ENCODE measurements at regions of chr6 and their contacts with region 1.

Region 1: GRCh38 chr6:145372671-145373151 is 362.6 kb downstream of the EPM2A start:
- DNase-seq: peak; percentile 32
- H3K4me3 Mint-ChIP-seq: peak overlapping the region; percentile 43
- H3K27ac Mint-ChIP-seq: no peak overlapping the region
- H3K4me1 Mint-ChIP-seq: peaks cover 15% of the 10 kb centered on the region
- H3K27me3 Mint-ChIP-seq: no peaks in the 10 kb centered on the region

Region 2: DNA sequence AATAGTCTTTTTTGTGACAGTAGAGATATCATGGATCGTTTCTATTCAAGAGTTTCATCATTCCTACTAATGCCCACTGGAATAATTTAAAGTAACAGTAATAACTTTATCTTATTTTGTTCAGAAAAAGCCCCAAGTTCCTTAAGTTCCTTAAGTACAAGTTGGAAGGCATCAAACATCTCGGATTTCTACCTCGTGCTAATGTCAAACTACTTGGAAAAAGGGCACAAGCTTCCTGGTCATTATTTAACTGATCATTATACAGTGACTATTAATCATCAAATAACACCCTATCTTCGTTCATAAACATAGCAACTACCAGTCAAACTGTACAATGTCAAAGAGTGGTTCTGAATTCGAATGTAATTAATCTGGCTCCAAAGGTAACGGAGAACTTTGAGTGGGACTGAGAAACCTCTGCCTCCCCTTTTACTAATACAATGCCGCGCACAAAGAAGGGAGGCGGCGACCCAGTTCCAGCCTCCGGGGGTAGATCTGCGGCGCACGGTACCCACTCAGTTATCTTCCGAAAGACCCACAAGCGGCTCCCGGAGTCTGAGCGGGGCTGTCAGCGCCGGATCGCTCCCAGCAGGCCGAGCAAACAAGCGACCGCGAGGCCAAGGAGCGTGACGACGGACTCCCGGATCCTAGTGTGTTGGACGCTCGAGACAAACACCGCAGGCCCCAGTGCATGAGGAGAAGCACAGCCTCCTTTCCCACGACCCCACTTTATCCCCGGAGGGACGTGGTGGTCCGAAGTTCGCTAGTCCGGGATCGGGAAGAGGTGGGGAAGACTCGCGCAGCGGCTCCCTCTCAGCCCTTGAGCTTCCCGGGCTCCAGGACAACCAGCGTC is 590.7 kb after region 1 on chr6:
- CTCF ChIA-PET with region 1: no interaction called
- POLR2A ChIA-PET with region 1: no interaction called
- intact Hi-C with region 1: loop called (anchors 10 kb)
- DNase-seq: peak; percentile 60
- H3K4me3 Mint-ChIP-seq: peak overlapping the region; percentile 94
- H3K27ac Mint-ChIP-seq: peak overlapping the region; percentile 85
- H3K4me1 Mint-ChIP-seq: peaks cover 50% of the 10 kb centered on the region
- H3K27me3 Mint-ChIP-seq: no peaks in the 10 kb centered on the region

Measured in activated CD4-positive, alpha-beta memory T cell treated with anti-CD3 and anti-CD28 coated beads for 36 hours (primary cell).